ENCODE measurements at regions of chr17 and their contacts with region 1.

Region 1: GRCh38 chr17:80847496-80848230 is 144.0 kb upstream of the CHMP6 start:
- DNase-seq: peak; percentile 88
- H3K4me3 Mint-ChIP-seq: peak overlapping the region; percentile 6
- H3K27ac Mint-ChIP-seq: peak overlapping the region; percentile 96
- H3K4me1 Mint-ChIP-seq: peaks cover 77% of the 10 kb centered on the region
- H3K27me3 Mint-ChIP-seq: no peaks in the 10 kb centered on the region

Region 2: GRCh38 chr17:80586846-80587228 is 260.8 kb before region 1 on chr17:
- CTCF ChIA-PET with region 1: no interaction called
- POLR2A ChIA-PET with region 1: no interaction called
- DNase-seq: no peak
- H3K4me3 Mint-ChIP-seq: no peak overlapping the region
- H3K27ac Mint-ChIP-seq: no peak overlapping the region
- H3K4me1 Mint-ChIP-seq: peaks cover 37% of the 10 kb centered on the region
- H3K27me3 Mint-ChIP-seq: no peaks in the 10 kb centered on the region

Region 3: GRCh38 chr17:80817321-80818251 is 30.1 kb before region 1 on chr17:
- CTCF ChIA-PET with region 1: no interaction called
- POLR2A ChIA-PET with region 1: interaction called, 13 read pairs
- DNase-seq: no peak
- H3K4me3 Mint-ChIP-seq: no peak overlapping the region
- H3K27ac Mint-ChIP-seq: peak overlapping the region; percentile 87
- H3K4me1 Mint-ChIP-seq: peaks cover 86% of the 10 kb centered on the region
- H3K27me3 Mint-ChIP-seq: no peaks in the 10 kb centered on the region

Region 4: DNA sequence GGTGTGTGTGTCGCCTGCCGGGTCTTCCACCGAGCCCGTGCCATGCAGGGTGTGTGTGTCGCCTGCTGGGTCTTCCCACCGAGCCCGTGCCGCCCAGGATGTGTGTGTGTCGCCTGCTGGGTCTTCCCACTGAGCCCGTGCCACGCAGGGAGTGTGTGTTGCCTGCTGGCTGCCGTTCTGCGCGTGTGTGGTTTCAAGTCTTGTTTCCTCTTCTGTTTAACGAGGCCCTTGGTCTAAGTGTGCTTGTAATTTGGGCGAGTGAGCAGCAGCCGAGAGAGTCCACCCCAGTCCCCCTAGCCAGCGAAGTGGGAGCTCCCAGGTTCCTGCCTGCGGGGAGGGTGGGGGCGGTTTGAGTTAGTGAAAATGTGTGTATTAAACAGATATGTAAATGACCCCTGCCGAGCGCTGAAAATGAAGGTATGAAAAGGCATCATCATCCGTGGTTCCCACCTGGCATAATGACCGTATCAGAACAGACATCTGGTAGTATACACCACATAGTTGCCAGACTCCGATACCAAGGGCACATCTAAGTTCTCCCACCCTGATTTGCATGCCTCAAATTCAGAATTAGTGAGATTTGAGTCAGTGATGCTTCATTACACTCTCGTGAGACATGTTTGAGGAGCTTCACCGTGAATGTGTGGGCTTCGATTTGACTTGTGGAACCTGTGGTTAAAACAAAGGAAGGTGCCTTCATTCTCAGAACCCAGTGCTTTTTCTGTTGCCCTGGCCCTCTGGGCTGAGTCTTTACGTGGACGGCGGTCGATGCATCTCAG is 29.5 kb after region 1 on chr17:
- CTCF ChIA-PET with region 1: no interaction called
- POLR2A ChIA-PET with region 1: interaction called, 17 read pairs
- DNase-seq: peak; percentile 77
- H3K4me3 Mint-ChIP-seq: peak overlapping the region; percentile 72
- H3K27ac Mint-ChIP-seq: peak overlapping the region; percentile 100
- H3K4me1 Mint-ChIP-seq: peaks cover 68% of the 10 kb centered on the region
- H3K27me3 Mint-ChIP-seq: no peaks in the 10 kb centered on the region

Measured in activated CD4-positive, alpha-beta memory T cell treated with anti-CD3 and anti-CD28 coated beads, Interleukin-2, amount 10 ng/mL, durations not matched to agents 7 days and 5 days (primary cell).